K562 (cell line): ENCODE measurements at regions of chr2 and their contacts with region 1.

Region 1: DNA sequence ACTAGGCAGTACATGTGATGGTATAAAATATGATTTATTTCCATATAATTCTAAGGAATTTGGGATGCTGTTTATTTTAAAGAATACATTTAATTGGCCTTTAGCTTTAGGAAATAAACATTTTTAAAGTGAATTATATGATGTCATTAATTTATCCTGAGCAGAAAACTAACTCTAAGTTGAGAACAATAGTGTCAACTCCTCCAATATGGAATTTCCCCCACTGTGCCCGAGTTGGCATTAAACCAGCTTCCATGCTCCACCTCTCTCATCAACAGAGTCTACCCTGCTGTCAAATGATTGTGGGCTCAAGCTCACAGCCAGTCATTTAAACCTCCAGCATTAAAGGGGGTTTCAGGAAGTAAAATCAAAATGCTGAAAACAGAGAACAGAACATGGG is 252.6 kb downstream of the MTX2 start:
- DNase-seq: no peak
- ATAC-seq: no peak
- H3K4me3 ChIP-seq: no peak overlapping the region
- H3K27ac ChIP-seq: no peak overlapping the region
- H3K4me1 ChIP-seq: no peaks in the 10 kb centered on the region
- H3K27me3 ChIP-seq: peaks cover 0 to 4% of the 10 kb centered on the region in 2 experiments; a peak in 1 of 5 replicates
- CTCF ChIP-seq: no peak
- EP300 ChIP-seq: no peak
- POLR2A ChIP-seq: no peak
- RAD21 ChIP-seq: no peak

Region 2: DNA sequence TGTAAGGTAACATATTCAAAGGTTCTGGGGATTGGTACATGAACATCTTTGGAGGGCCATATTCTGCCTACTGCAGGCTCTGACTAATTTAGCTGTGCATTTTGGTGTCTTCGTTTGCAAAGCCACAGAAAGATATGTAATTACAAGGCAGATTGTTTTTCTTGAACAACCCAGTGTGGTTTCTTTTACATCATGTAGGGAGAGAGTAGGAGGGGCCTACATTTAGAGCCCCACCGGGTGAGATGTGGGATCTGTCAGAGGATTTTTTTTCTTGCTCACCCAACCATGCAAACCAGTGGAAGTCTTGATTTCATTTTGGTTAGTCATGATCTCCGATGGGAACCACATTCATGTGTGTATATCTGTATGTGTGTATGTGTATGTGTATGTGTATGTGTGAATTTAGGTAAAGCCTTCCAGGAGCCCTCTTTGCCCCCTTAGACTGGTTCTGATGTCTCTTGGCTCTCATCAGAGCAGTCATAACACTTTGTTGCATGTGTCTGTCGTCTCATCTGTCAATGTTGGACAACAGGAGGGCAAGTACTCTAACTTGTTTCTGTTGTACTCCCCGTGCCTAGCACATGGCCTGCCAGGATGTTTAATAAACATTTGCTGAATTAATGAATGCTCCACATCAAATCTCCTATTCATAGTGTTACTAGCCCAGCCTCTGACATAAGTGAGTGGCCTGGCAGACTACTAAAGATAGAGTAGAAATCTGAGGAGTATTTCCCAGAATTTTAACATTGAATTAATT is 12.7 kb before region 1 on chr2:
- CTCF ChIA-PET with region 1: no interaction called
- POLR2A ChIA-PET with region 1: interaction called, 3 read pairs
- in situ Hi-C with region 1: no loop called
- intact Hi-C with region 1: loop called (anchors 1 kb)
- DNase-seq: no peak
- ATAC-seq: no peak
- H3K4me3 ChIP-seq: no peak overlapping the region
- H3K27ac ChIP-seq: no peak overlapping the region
- H3K4me1 ChIP-seq: no peaks in the 10 kb centered on the region
- H3K27me3 ChIP-seq: no peaks in the 10 kb centered on the region
- CTCF ChIP-seq: no peak
- EP300 ChIP-seq: no peak
- POLR2A ChIP-seq: no peak
- RAD21 ChIP-seq: no peak